ENCODE measurements at regions of chr15 and their contacts with region 1.

Region 1: DNA sequence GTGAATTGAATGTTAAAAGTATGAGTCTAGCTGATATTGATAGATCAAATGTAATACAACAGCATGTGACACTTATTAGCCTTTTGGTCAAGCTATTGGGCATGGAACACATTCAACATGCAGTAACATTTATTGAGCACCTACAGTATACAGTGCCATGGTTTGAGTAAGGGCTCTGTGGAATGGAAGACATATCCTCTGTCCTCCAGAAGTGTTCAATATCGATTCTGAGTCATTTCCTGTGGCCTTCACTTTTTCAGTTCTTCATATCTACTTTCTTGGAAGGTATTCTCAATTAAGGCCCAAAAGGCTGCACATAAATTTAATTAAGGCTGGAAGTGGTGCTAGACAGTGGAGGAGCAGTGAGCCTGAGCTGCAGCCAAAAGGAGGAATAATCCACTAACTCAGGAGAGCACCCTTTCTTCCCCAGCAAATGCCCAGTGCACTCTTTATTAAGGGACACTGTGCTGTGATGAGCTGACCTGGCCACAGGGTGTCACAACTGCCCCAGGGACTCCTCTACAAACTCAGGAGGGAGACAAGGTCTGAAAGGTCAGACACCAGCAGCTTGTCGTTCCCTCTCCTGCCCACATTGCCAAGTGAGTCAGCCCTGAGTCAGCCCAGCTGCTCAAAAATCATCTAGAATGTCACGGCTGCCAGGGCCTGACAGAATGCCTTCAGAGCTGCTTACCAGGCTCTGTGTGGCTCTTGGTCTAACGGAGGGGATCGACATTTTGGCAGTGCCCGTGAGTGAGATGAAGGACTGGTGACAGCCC is 544.8 kb downstream of the AGBL1 start:
- DNase-seq: peak; percentile 74 to 92 (median 82)
- ATAC-seq: peak; percentile 96 to 100 (median 100)
- H3K4me3 ChIP-seq: no peak overlapping the region
- H3K27ac ChIP-seq: peak overlapping the region in 5 of 12 donors; percentile 10 to 63 (median 44)
- H3K4me1 ChIP-seq: peaks cover 0 to 6% (median 1%) of the 10 kb centered on the region in 12 donors
- H3K27me3 ChIP-seq: no peaks in the 10 kb centered on the region
- CTCF ChIP-seq: peak; percentile 19 to 68 (median 54)
- POLR2A ChIP-seq: no peak

Region 2: GRCh38 chr15:86743283-86743903 is 118.9 kb after region 1 on chr15:
- intact Hi-C with region 1: loop called in 1 of 10 experiments (anchors 5 kb)
- DNase-seq: peak in 2 of 5 donors; percentile 17 to 49
- ATAC-seq: no peak
- H3K4me3 ChIP-seq: no peak overlapping the region
- H3K27ac ChIP-seq: no peak overlapping the region
- H3K4me1 ChIP-seq: no peaks in the 10 kb centered on the region
- H3K27me3 ChIP-seq: no peaks in the 10 kb centered on the region
- CTCF ChIP-seq: peak in 9 of 12 donors; percentile 30 to 56 (median 49)
- POLR2A ChIP-seq: no peak

Region 3: GRCh38 chr15:87604857-87605446 is 980.5 kb after region 1 on chr15:
- intact Hi-C with region 1: loop called in 1 of 10 experiments (anchors 10 kb)
- DNase-seq: no peak
- ATAC-seq: no peak
- H3K4me3 ChIP-seq: no peak overlapping the region
- H3K27ac ChIP-seq: no peak overlapping the region
- H3K4me1 ChIP-seq: peaks cover 0 to 10% (median 1%) of the 10 kb centered on the region in 12 donors
- H3K27me3 ChIP-seq: no peaks in the 10 kb centered on the region
- CTCF ChIP-seq: peak; percentile 20 to 57 (median 42)
- POLR2A ChIP-seq: no peak

Region 4: GRCh38 chr15:88018856-88019641 is 1394.6 kb after region 1 on chr15:
- intact Hi-C with region 1: loop called in 1 of 10 experiments (anchors 5 kb)
- DNase-seq: no peak
- ATAC-seq: no peak
- H3K4me3 ChIP-seq: no peak overlapping the region
- H3K27ac ChIP-seq: no peak overlapping the region
- H3K4me1 ChIP-seq: no peaks in the 10 kb centered on the region
- H3K27me3 ChIP-seq: no peaks in the 10 kb centered on the region
- CTCF ChIP-seq: no peak
- POLR2A ChIP-seq: no peak

Region 5: DNA sequence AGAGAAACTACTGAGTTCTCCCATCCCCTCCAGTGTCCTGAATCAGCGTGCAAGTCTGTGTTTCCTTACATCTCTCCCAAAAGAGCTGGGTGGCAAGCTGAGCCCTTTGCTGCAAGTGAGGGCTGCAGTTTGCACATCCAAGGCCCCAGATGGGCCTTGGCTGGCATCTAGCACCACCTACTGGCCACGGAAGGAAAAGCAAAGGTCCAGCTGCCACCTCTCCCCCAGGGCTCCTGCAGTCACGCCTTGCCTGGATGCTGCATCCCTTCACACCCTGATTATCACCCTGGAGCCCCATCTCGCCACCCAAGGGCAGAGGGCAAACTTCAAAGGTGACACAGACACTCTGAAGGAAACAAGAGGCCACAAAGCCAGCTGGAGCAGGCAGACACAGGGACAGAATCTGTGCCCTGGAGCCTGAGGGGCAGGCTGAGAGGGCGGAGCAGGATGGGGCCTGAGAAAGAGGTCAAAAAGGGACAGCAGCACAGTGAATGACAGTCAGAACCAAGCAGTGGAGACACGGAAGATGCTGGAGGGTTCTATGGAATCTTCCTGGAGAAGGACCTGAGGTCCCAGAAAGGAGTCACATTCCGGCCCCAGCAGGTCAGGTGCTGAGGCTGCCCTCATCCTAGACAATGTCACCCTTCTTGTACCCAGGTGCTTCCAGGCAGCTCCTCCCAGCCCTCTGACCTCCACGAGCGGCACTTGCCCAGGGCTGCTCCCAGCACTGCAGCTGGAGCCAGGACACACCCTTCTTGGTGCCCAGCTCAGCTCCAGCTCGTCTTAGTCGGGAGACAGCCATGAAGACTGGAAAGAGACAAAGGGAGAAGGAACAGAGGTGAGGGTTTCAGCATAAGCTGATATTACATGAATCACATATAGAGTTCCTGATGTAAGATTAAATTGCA is 1650.4 kb after region 1 on chr15:
- intact Hi-C with region 1: loop called in 3 of 10 experiments (anchors 10 kb)
- DNase-seq: peak in 4 of 5 donors; percentile 46 to 57 (median 52)
- ATAC-seq: peak; percentile 32 to 81 (median 78)
- H3K4me3 ChIP-seq: no peak overlapping the region
- H3K27ac ChIP-seq: no peak overlapping the region
- H3K4me1 ChIP-seq: no peaks in the 10 kb centered on the region
- H3K27me3 ChIP-seq: peaks cover 0 to 16% (median 0%) of the 10 kb centered on the region in 9 donors
- CTCF ChIP-seq: peak; percentile 67 to 84 (median 80)
- POLR2A ChIP-seq: no peak